AG04450 (cell line): ENCODE measurements at regions of chr2 and their contacts with region 1.

Region 1: DNA sequence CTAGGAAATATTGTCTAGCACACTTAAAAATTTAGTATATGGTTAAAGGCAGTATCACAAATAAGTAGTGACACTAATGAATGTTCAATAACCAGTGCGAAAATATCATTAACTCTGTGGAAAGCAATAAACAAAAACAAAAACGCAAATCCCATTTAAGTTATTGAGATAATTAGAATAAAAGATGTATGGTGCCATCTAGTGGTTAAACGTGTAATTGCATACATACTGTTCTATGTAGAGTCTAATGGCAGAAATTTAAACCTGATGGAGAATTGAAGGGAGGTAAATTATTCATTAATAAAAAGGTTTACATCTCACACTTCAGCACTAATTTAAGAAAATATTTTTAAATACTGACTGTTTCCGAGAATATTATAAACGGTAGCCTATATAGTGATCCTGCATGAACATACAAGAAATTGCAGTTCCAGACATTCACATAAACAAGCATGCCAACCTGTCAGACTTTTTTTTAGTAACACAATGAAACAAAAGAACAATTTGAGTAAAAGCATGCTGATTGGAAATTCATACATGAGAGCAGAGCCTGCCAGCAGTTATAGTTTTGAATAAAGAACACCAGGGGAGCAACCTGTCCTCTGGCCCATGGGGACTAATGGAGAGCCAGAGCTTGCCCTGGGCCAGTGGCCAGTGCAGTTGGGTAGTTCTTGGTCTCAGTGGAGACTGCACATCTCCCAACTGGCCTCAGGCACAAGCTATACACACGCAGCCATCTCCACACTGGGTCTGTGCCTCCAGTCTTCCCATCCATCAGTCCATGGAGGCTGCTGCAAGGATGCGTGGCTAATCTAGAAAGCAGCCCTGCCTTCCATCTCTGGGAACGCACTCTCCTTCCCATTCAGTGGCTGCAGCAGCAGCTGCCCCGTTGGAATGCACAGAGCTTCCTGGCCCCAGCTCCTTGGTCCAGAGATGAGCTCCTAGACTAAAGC is 28.0 kb downstream of the GCG start:
- DNase-seq: no peak
- H3K4me3 ChIP-seq: no peak overlapping the region
- H3K27ac ChIP-seq: no peak overlapping the region
- H3K27me3 ChIP-seq: no peaks in the 10 kb centered on the region
- CTCF ChIP-seq: peak; percentile 60

Region 2: GRCh38 chr2:161946489-161947107 is 177.5 kb before region 1 on chr2:
- CTCF ChIA-PET with region 1: interaction called, 18 read pairs
- POLR2A ChIA-PET with region 1: no interaction called
- DNase-seq: no peak
- H3K4me3 ChIP-seq: no peak overlapping the region
- H3K27ac ChIP-seq: no peak overlapping the region
- H3K27me3 ChIP-seq: no peaks in the 10 kb centered on the region
- CTCF ChIP-seq: peak; percentile 61

Region 3: DNA sequence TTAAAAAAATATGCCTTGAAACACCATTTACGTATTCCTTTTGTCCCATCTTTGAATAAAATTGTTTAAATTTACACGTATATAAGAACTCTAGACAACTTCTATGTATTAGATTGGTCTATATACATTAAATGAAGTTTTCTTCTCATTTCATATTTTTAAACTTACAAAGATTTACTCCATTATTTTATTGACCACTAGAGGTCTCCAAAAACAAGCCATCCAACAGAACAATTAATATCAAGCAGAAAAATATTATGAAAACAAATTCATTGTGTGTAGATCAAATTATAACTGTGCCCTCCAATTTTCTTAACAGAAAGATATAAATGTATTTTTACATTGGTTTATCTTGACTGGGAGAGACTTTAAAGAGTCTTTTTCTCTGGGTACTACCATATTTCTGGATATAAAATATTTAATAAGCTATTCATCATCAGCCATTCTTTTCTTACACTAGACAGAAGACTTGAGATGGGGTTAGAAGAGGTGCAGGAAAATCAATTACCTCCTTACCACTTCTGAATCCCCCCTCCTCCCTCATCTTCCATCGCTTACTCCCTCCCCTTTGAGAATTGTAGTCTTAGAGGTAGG is 116.5 kb before region 1 on chr2:
- CTCF ChIA-PET with region 1: interaction called, 14 read pairs
- POLR2A ChIA-PET with region 1: no interaction called
- DNase-seq: no peak
- H3K4me3 ChIP-seq: no peak overlapping the region
- H3K27ac ChIP-seq: no peak overlapping the region
- H3K27me3 ChIP-seq: no peaks in the 10 kb centered on the region
- CTCF ChIP-seq: peak; percentile 54